ENCODE measurements at regions of chr1 and their contacts with region 1.

Region 1: GRCh38 chr1:115041654-115042053 is 12.0 kb downstream of the TSHB start:
- DNase-seq: peak; percentile 46
- ATAC-seq: peak; percentile 86
- H3K4me3 ChIP-seq: no peak overlapping the region
- H3K27ac ChIP-seq: no peak overlapping the region
- H3K4me1 ChIP-seq: no peaks in the 10 kb centered on the region
- H3K27me3 ChIP-seq: no peaks in the 10 kb centered on the region
- CTCF ChIP-seq: peak; percentile 55 to 62 (median 61); a peak in 5 of 6 replicates
- POLR2A ChIP-seq: no peak
- RAD21 ChIP-seq: peak; percentile 76

Region 2: DNA sequence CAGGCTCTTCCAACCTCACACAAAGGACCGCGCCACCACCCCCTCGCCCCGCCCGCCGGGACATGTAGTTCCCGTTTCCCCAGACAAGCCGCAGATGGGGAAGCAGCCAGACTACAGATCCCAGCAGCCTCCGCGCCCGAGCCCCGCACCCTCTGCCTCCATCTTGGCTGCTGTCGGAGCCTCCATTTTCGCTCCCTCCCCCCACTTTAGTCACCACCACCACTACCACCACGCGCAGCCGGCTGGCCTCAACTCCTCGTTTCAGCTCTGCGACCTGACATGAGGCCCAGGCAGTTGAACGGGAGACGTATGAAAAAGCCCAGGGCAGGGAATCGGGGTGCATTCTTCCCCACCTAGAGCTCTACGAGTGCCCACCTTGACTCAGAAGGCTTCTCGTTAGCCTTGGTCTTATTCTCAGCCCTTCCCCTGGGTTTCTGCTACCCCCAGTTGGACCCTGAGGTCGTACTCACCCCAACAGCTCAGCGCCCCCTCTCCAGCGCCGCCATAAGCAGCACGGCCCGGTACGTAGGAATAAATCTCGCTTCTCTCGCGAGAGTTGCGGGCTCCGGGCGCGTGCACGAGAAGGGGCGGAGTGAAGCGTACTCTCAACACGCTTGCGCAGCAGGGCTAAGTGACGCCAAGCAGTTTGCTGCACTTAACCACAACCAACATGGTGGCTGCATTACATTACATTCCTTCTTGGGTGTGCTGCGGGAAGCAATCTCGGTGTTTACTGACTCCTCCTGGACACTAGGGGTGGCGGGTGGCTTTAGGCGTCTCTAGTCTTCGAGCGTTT is 284.0 kb before region 1 on chr1 and contains the start of gene CSDE1:
- CTCF ChIA-PET with region 1: no interaction called
- POLR2A ChIA-PET with region 1: no interaction called
- RAD21 ChIA-PET with region 1: no interaction called
- intact Hi-C with region 1: loop called (anchors 10 kb)
- DNase-seq: peak; percentile 98
- ATAC-seq: peak; percentile 89
- H3K4me3 ChIP-seq: peak within 1 kb of the TSS; percentile 80 to 97
- H3K27ac ChIP-seq: peak within 1 kb of the TSS; percentile 93
- H3K4me1 ChIP-seq: peaks cover 12 to 28% of the 10 kb centered on the region in 2 experiments
- H3K27me3 ChIP-seq: no peaks in the 10 kb centered on the region
- CTCF ChIP-seq: peak in 2 of 3 experiments; percentile 66 to 73; a peak in 4 of 6 replicates
- POLR2A ChIP-seq: peak; percentile 90
- RAD21 ChIP-seq: peak; percentile 42
- total RNA-seq, gene CSDE1: 515 TPM